ENCODE measurements at regions of chr4 and their contacts with region 1.

Region 1: DNA sequence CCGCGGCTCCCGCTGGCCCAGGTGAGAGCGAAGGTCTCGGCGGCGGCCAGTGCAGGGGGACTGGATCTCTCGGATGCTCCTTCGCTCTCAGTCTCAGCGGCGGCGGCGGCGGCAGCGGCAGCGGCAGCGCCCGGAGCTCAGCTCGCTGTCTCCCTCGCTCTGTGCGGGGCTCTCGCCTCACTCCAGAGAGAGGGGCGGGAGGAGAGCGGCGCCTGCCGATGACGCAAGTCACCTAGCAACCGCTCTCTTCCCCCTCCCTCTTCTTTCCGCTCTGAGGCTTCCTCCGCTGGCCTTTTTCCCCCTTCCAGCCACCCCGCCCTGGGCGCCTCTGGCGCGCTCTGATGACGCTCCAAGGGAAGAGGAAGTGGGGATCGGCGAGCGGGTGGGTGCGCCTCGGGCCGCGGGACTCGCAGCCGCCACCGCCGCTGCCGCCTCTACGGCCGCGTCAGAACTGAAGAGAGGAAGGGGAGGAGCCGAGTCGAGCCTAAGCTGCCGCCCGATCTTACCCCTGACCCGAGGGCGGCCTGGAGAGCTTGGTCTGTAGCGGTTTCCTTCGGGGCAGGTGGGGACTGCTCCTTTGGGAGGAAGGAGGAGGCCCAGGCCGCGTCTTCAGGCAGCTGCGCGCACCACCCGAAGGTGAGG is at the start of gene FBXW7:
- DNase-seq: peak; percentile 99
- ATAC-seq: peak; percentile 87
- H3K4me3 Mint-ChIP-seq: peak within 1 kb of the TSS; percentile 82
- H3K27ac Mint-ChIP-seq: peak within 1 kb of the TSS; percentile 98
- H3K4me1 Mint-ChIP-seq: peaks cover 51% of the 10 kb centered on the region
- H3K27me3 Mint-ChIP-seq: no peaks in the 10 kb centered on the region
- total RNA-seq, gene FBXW7: 29.8 to 31.6 TPM

Region 2: DNA sequence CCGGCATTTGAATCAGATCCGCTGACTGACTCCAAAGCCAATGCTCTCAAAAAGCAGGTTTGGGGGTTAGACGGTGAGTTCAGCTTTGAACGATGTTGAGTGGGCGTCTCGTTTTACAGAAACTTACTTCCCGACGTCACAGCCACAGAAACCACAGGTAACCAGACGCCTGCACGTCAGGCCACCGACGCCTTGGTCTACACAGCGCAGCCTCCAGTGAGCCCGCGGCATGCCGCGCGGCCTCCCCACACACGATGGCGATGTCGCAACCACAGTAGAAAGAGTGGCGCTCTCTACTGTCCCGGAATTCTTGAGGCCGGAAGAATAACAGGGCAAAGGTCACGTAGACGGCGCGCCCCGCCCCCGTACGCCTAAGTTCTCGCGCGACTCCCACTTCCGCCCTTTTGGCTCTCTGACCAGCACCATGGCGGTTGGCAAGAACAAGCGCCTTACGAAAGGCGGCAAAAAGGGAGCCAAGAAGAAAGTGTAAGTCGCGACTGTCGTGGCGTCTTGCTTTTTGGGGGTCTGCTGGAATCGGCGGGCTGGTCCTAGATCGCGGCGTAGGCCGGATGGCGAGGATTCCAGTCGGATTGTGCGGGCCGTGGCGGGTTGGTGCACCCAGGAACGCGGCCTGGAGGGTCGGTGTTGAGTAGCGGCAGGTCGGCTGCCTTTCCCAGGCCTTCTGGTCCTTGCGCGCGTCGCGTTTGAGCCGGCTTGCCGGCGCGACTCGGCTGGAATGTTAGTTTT is 1436.6 kb before region 1 on chr4 and contains the start of gene RPS3A:
- CTCF ChIA-PET with region 1: no interaction called
- POLR2A ChIA-PET with region 1: no interaction called
- intact Hi-C with region 1: loop called (anchors 1 to 10 kb)
- DNase-seq: peak; percentile 98
- ATAC-seq: peak; percentile 86
- H3K4me3 Mint-ChIP-seq: peak within 1 kb of the TSS; percentile 89
- H3K27ac Mint-ChIP-seq: peak within 1 kb of the TSS; percentile 100
- H3K4me1 Mint-ChIP-seq: peaks cover 42% of the 10 kb centered on the region
- H3K27me3 Mint-ChIP-seq: no peaks in the 10 kb centered on the region
- total RNA-seq, gene RPS3A: 2,077 to 2,995 TPM

Region 3: GRCh38 chr4:152100379-152101201 is 435.4 kb before region 1 on chr4:
- CTCF ChIA-PET with region 1: no interaction called
- POLR2A ChIA-PET with region 1: no interaction called
- intact Hi-C with region 1: loop called in 1 of 2 experiments (anchors 5 kb)
- DNase-seq: peak; percentile 86
- ATAC-seq: peak; percentile 90
- H3K4me3 Mint-ChIP-seq: peak overlapping the region; percentile 66
- H3K27ac Mint-ChIP-seq: peak overlapping the region; percentile 96
- H3K4me1 Mint-ChIP-seq: peaks cover 88% of the 10 kb centered on the region
- H3K27me3 Mint-ChIP-seq: no peaks in the 10 kb centered on the region

Region 4: GRCh38 chr4:152556283-152556682 is 20.3 kb after region 1 on chr4:
- CTCF ChIA-PET with region 1: interaction called, 31 read pairs
- POLR2A ChIA-PET with region 1: interaction called, 29 read pairs
- intact Hi-C with region 1: loop called (anchors 1 kb)
- DNase-seq: no peak
- ATAC-seq: no peak
- H3K4me3 Mint-ChIP-seq: peak overlapping the region; percentile 27
- H3K27ac Mint-ChIP-seq: peak overlapping the region; percentile 53
- H3K4me1 Mint-ChIP-seq: peaks cover 55% of the 10 kb centered on the region
- H3K27me3 Mint-ChIP-seq: no peaks in the 10 kb centered on the region

Region 5: DNA sequence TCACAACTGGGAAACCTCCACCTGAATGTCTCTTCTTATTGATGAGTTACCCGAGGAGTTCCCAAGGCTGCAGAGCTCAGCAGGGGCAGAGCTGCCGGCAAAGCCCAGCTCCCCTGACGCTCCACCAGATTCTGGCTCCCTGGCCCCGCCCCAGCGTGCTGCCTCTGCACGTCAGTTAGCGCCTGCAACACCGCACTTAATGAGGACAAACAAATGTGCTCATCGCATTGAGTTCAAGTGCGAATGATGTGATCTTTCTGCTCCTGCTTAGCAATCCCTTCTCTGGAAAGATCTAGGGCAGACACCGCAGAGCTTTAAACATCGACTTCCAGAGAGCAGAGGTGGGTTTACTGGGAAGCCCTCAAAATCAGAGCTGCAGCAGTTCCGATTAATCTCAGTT is 55.4 kb after region 1 on chr4:
- CTCF ChIA-PET with region 1: no interaction called
- POLR2A ChIA-PET with region 1: no interaction called
- intact Hi-C with region 1: no loop called
- DNase-seq: peak; percentile 63
- ATAC-seq: peak; percentile 71
- H3K4me3 Mint-ChIP-seq: no peak overlapping the region
- H3K27ac Mint-ChIP-seq: no peak overlapping the region
- H3K4me1 Mint-ChIP-seq: peaks cover 11% of the 10 kb centered on the region
- H3K27me3 Mint-ChIP-seq: peaks cover 7% of the 10 kb centered on the region

Region 6: DNA sequence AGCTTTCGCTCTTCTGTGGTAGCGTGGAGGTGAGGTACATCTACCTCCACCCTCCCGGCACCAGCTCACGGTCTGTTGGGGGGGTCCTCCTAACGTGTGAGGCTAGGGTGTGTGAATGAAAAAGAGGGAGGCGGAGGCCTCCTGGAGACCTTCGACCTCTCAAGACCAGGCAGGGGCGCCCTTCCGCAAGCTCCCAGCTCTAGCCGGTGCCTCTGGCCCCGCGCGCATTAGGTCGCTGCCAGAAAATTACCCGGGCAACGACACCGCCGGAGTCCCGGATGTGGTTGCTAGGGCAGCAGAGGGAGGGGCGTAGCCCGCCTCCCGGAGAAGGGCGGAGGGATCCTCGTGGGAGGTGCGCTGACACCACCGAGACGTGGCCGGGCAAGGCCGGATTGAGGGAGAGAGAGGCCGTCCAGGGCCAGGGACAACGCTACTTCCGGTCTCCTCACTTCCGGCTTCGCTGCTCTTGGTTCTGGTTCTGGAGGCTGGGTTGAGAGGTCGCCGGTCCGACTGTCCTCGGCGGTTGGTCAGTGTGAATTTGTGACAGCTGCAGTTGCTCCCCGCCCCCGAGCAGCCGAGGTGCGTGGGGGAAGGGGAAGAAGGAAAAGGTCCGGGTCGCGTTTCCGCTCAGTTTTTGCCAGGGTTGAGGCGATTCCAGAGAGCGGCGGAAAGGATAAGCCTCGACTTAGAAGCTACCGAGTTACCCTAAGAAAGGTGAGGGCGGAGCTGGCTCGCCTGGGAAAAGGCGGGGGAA is 243.7 kb after region 1 on chr4 and contains the starts of genes ARFIP1 and TIGD4:
- CTCF ChIA-PET with region 1: no interaction called
- POLR2A ChIA-PET with region 1: interaction called, 6 read pairs
- intact Hi-C with region 1: loop called (anchors 1 kb)
- DNase-seq: peak; percentile 97
- ATAC-seq: peak; percentile 91
- H3K4me3 Mint-ChIP-seq: peak within 1 kb of the TSS; percentile 96
- H3K27ac Mint-ChIP-seq: peak within 1 kb of the TSS; percentile 94
- H3K4me1 Mint-ChIP-seq: peaks cover 44% of the 10 kb centered on the region
- H3K27me3 Mint-ChIP-seq: peaks cover 5% of the 10 kb centered on the region
- total RNA-seq, gene ARFIP1: 8.4 to 10.5 TPM
- total RNA-seq, gene TIGD4: 0.27 to 0.28 TPM

Region 7: GRCh38 chr4:153249199-153250041 is 713.4 kb after region 1 on chr4:
- CTCF ChIA-PET with region 1: no interaction called
- POLR2A ChIA-PET with region 1: no interaction called
- intact Hi-C with region 1: loop called in 1 of 2 experiments (anchors 1 kb)
- DNase-seq: peak; percentile 91
- ATAC-seq: peak; percentile 98
- H3K4me3 Mint-ChIP-seq: peak overlapping the region; percentile 71
- H3K27ac Mint-ChIP-seq: peak overlapping the region; percentile 63
- H3K4me1 Mint-ChIP-seq: peaks cover 11% of the 10 kb centered on the region
- H3K27me3 Mint-ChIP-seq: no peaks in the 10 kb centered on the region

Measured in activated CD4-positive, alpha-beta T cell treated with anti-CD3 and anti-CD28 coated beads for 36 hours (primary cell).